ENCODE measurements at regions of chr3 and their contacts with region 1.

Region 1: GRCh38 chr3:169581633-169582032 is 81.9 kb downstream of the MECOM start:
- DNase-seq: peak; percentile 46
- H3K4me3 ChIP-seq: no peak overlapping the region
- H3K27ac ChIP-seq: peak overlapping the region; percentile 19
- H3K4me1 ChIP-seq: peaks cover 26% of the 10 kb centered on the region
- H3K27me3 ChIP-seq: no peaks in the 10 kb centered on the region
- CTCF ChIP-seq: no peak
- POLR2A ChIP-seq: no peak

Region 2: GRCh38 chr3:169591983-169592644 is 10.5 kb after region 1 on chr3:
- CTCF ChIA-PET with region 1: interaction called, 4 read pairs
- POLR2A ChIA-PET with region 1: no interaction called
- dilution Hi-C with region 1: no loop called
- intact Hi-C with region 1: loop called (anchors 1 kb)
- DNase-seq: peak; percentile 61
- H3K4me3 ChIP-seq: no peak overlapping the region
- H3K27ac ChIP-seq: peak overlapping the region; percentile 31
- H3K4me1 ChIP-seq: peaks cover 10% of the 10 kb centered on the region
- H3K27me3 ChIP-seq: no peaks in the 10 kb centered on the region
- CTCF ChIP-seq: no peak
- POLR2A ChIP-seq: no peak

Measured in endothelial cell of umbilical vein (primary cell).